ENCODE measurements at regions of chr12 and their contacts with region 1.

Region 1: GRCh38 chr12:53005986-53006809 is at the start of gene EIF4B:
- DNase-seq: peak; percentile 100
- ATAC-seq: peak; percentile 96 to 97 (median 96)
- H3K4me3 ChIP-seq: peak within 1 kb of the TSS; percentile 57 to 97 (median 88)
- H3K27ac ChIP-seq: peak within 1 kb of the TSS; percentile 33 to 97 (median 89)
- H3K4me1 ChIP-seq: peaks cover 7 to 55% (median 42%) of the 10 kb centered on the region in 12 donors
- H3K27me3 ChIP-seq: peaks cover 0 to 1% (median 0%) of the 10 kb centered on the region in 9 donors
- CTCF ChIP-seq: no peak
- POLR2A ChIP-seq: peak in 1 of 2 donors; percentile 62
- total RNA-seq, gene EIF4B: 307 to 481 (median 348) TPM

Region 2: DNA sequence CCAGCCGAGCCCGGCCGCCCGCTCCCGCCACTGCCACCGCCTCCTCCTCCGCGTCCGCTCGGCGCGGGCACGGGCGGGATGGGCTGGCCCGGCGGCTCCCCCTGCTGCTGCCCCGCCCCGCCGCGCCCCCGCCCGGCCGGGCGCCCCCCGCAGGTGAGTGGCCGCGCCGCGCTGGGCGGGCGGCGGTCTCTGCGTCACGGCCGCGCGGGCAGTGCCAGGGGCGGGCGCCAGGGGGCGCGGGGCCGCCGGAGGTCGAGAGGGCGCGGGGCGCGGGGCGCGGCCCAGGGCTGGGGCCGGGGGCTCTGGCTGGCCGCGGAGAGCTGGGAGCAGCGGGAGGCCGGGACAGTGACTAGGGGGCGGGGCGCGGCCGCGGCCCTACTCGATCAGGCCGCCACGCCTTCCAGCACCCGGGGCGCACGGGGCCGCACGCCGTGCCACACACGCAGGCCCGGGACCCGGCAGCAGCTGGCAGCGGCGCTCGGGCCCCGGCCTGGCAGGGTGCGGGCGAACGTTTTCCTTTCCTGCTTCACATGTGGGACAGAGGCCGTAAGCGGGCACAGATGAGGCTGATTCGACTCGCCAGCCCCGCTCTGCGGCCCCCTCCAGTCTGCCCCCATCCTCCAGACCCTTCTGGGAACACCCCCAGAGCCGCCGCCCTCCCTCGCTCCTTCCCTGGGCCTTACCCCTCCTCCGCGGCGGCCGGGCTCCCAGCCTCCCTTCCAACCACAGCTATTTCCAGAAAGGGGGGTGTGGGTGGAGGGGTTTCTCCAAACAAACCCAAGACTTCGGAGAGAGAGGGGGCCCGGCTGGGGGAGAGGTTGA is 41.2 kb after region 1 on chr12:
- intact Hi-C with region 1: loop called in 1 of 10 experiments (anchors 5 kb)
- DNase-seq: peak; percentile 84 to 89 (median 86)
- ATAC-seq: peak in 3 of 4 donors; percentile 7 to 20 (median 16)
- H3K4me3 ChIP-seq: peak overlapping the region; percentile 38 to 84 (median 78)
- H3K27ac ChIP-seq: peak overlapping the region; percentile 96 to 100 (median 99)
- H3K4me1 ChIP-seq: peaks cover 7 to 88% (median 68%) of the 10 kb centered on the region in 12 donors
- H3K27me3 ChIP-seq: no peaks in the 10 kb centered on the region
- CTCF ChIP-seq: peak in 5 of 12 donors; percentile 7 to 45 (median 29)
- POLR2A ChIP-seq: peak; percentile 59 to 76

Measured in heart left ventricle (tissue), 16 donors.